Dorsolateral prefrontal cortex (tissue), 120 donors: ENCODE measurements at regions of chr1 and their contacts with region 1.

Region 1: GRCh38 chr1:205791568-205792180 is 16.4 kb upstream of the RAB29 start:
- DNase-seq: peak; percentile 57 to 86 (median 75)
- H3K4me3 ChIP-seq: no peak overlapping the region
- H3K27ac ChIP-seq: peak overlapping the region in 44 of 59 donors; percentile 9 to 82 (median 56)
- H3K27me3 ChIP-seq: no peaks in the 10 kb centered on the region
- CTCF ChIP-seq: peak; percentile 38 to 93 (median 83)

Region 2: DNA sequence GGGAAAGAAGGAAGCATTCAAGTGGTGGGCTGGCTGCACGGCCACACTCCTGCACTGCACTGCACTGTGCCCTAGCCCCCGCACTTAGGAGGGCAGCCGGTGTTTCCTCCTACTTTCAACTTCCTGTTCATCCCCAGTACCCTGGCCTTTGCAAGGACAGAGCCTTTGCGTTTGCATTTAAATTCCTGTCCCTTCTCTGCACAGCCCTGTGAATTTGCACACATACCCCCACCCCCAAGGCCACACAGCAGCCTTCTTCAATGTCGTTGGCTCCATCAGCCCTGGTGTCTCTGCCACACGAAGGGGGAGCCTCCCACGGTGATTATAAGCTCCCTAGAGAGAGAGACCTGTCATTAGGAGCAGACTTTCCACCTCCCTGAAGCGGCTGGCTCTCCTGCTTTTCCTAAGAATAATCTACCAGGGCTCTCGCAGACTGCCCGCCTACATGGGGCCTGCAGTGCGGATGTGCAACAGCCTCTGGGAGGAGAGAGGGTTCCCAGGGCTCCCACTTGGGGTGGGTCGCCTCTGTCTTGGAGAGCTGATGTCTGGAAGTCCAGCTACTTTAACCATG is 98.2 kb before region 1 on chr1:
- intact Hi-C with region 1: no loop called
- DNase-seq: peak in 1 of 10 donors; percentile 43
- H3K4me3 ChIP-seq: no peak overlapping the region
- H3K27ac ChIP-seq: peak overlapping the region in 29 of 59 donors; percentile 0 to 67 (median 38)
- H3K27me3 ChIP-seq: no peaks in the 10 kb centered on the region
- CTCF ChIP-seq: no peak

Region 3: GRCh38 chr1:205840146-205840923 is 48.7 kb after region 1 on chr1:
- intact Hi-C with region 1: loop called in 1 of 2 experiments (anchors 5 kb)
- DNase-seq: no peak
- H3K4me3 ChIP-seq: no peak overlapping the region
- H3K27ac ChIP-seq: peak overlapping the region in 3 of 59 donors; percentile 1 to 11 (median 5)
- H3K27me3 ChIP-seq: no peaks in the 10 kb centered on the region
- CTCF ChIP-seq: no peak

Region 4: GRCh38 chr1:205907794-205908193 is 116.1 kb after region 1 on chr1:
- intact Hi-C with region 1: loop called in 1 of 2 experiments (anchors 2 kb)
- DNase-seq: no peak
- H3K4me3 ChIP-seq: no peak overlapping the region
- H3K27ac ChIP-seq: no peak overlapping the region
- H3K27me3 ChIP-seq: no peaks in the 10 kb centered on the region
- CTCF ChIP-seq: peak in 52 of 56 donors; percentile 17 to 68 (median 50)

Region 5: DNA sequence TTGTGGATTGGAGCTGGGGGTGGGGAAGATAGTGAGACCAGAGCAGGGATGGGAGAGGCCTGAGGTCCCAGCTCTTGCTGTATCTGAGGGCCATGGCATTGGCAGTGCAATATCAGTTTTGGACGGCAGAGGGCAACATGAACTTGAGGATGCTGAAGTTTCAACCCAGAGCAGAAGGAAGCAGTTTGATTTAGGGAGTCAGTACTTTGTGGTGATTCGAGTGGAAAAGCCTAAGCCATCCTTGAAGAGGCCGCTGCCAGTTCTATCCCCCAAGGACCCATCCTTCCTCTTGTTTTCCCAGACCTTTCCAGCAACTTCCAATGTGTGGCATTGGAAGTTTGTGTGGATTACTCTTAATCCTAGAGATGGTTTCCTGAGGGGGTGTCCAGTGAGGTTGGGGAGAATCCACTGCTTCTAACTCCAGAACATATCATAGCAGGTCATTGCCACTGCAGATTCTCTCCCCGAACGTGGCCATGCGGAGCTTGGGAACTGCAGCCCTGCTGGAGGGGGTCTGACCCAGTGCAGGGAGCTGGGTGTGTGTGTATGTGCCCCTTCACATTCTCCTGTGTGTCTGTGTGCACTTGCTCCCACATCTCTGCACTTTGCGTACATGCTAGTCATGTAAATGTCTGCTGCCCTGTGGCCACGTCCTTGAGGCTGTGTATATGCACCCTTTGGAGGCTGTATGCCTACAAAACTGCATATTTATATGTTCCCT is 127.5 kb after region 1 on chr1:
- intact Hi-C with region 1: loop called (anchors 2 kb)
- DNase-seq: peak; percentile 74 to 95 (median 88)
- H3K4me3 ChIP-seq: no peak overlapping the region
- H3K27ac ChIP-seq: peak overlapping the region in 29 of 59 donors; percentile 1 to 72 (median 41)
- H3K27me3 ChIP-seq: no peaks in the 10 kb centered on the region
- CTCF ChIP-seq: peak in 55 of 56 donors; percentile 81 to 99 (median 96)

Region 6: GRCh38 chr1:205977402-205978014 is 185.8 kb after region 1 on chr1:
- intact Hi-C with region 1: loop called (anchors 2 to 5 kb)
- DNase-seq: peak; percentile 66 to 84 (median 72)
- H3K4me3 ChIP-seq: no peak overlapping the region
- H3K27ac ChIP-seq: peak overlapping the region in 58 of 59 donors; percentile 13 to 92 (median 80)
- H3K27me3 ChIP-seq: no peaks in the 10 kb centered on the region
- CTCF ChIP-seq: peak; percentile 79 to 100 (median 99)

Region 7: GRCh38 chr1:206106328-206107167 is 314.9 kb after region 1 on chr1:
- intact Hi-C with region 1: loop called (anchors 5 to 10 kb)
- DNase-seq: peak; percentile 72 to 88 (median 78)
- H3K4me3 ChIP-seq: no peak overlapping the region
- H3K27ac ChIP-seq: peak overlapping the region in 1 of 59 donors; percentile 10
- H3K27me3 ChIP-seq: no peaks in the 10 kb centered on the region
- CTCF ChIP-seq: peak; percentile 84 to 98 (median 94)

Region 8: GRCh38 chr1:206117151-206117948 is 325.7 kb after region 1 on chr1 and contains the start of gene AVPR1B:
- intact Hi-C with region 1: loop called in 1 of 2 experiments (anchors 10 kb)
- DNase-seq: peak in 3 of 10 donors; percentile 23 to 61 (median 41)
- H3K4me3 ChIP-seq: peak within 1 kb of the TSS; percentile 29 to 77 (median 60)
- H3K27ac ChIP-seq: no peak within 1 kb of the TSS
- H3K27me3 ChIP-seq: peaks cover 0 to 7% (median 0%) of the 10 kb centered on the region in 45 donors
- CTCF ChIP-seq: peak in 3 of 56 donors; percentile 11 to 20 (median 15)
- total RNA-seq, gene AVPR1B: 0.20 to 1.4 (median 0.39) TPM in 13 of 120 experiments, not detected in the others